ENCODE measurements at regions of chr3 and their contacts with region 1.

Region 1: GRCh38 chr3:42101048-42101447 is 9.9 kb downstream of the TRAK1 start:
- DNase-seq: peak; percentile 60
- H3K4me3 ChIP-seq: no peak overlapping the region
- CTCF ChIP-seq: no peak

Region 2: DNA sequence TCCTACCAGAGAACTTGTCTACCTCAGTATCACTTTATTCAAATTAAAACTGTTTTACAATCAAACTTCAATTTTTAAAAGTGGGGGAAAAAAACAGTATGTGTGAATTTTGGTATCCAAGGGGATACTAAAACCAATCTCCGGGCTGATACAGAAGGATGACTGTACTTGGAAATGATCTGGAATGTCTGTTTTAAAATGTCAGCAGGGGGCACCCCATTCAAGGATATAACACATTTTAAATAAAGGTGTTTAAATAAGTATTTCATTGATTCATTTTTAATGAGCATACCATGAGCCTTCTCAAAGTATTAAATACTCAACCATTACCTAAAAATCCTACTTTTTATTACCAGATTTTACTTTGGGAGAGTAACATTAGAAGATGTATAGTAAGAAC is 207.1 kb before region 1 on chr3:
- CTCF ChIA-PET with region 1: interaction called, 160 read pairs
- POLR2A ChIA-PET with region 1: no interaction called
- DNase-seq: peak; percentile 10
- H3K4me3 ChIP-seq: no peak overlapping the region
- CTCF ChIP-seq: peak; percentile 5

Region 3: DNA sequence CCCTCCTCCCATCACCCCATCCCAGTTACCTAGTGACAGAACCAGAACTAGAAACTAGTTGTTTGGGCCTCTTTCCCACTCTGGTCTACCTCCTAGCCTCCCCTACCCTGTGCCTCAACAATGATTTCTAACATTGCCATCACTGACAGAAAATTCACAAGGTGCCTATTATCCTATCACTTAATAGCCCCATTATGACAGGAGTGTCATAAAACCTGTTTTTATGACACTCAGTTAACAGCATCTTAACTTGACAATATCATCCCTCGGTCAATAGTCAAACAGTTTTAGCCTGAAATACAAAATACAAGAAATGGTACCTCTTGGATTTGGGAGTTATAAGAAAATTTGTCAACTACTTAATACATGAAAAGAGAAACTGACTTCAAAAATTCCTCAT is 185.7 kb before region 1 on chr3:
- CTCF ChIA-PET with region 1: interaction called, 30 read pairs
- POLR2A ChIA-PET with region 1: no interaction called
- DNase-seq: no peak
- H3K4me3 ChIP-seq: no peak overlapping the region
- CTCF ChIP-seq: no peak

Region 4: GRCh38 chr3:42007785-42008184 is 93.3 kb before region 1 on chr3:
- CTCF ChIA-PET with region 1: interaction called, 22 read pairs
- POLR2A ChIA-PET with region 1: no interaction called
- DNase-seq: no peak
- H3K4me3 ChIP-seq: no peak overlapping the region
- CTCF ChIP-seq: no peak

Region 5: GRCh38 chr3:42036483-42036823 is 64.6 kb before region 1 on chr3:
- CTCF ChIA-PET with region 1: interaction called, 10 read pairs
- POLR2A ChIA-PET with region 1: no interaction called
- DNase-seq: peak; percentile 87
- H3K4me3 ChIP-seq: no peak overlapping the region; the same call in 1 of the 2 replicates
- CTCF ChIP-seq: no peak

Region 6: DNA sequence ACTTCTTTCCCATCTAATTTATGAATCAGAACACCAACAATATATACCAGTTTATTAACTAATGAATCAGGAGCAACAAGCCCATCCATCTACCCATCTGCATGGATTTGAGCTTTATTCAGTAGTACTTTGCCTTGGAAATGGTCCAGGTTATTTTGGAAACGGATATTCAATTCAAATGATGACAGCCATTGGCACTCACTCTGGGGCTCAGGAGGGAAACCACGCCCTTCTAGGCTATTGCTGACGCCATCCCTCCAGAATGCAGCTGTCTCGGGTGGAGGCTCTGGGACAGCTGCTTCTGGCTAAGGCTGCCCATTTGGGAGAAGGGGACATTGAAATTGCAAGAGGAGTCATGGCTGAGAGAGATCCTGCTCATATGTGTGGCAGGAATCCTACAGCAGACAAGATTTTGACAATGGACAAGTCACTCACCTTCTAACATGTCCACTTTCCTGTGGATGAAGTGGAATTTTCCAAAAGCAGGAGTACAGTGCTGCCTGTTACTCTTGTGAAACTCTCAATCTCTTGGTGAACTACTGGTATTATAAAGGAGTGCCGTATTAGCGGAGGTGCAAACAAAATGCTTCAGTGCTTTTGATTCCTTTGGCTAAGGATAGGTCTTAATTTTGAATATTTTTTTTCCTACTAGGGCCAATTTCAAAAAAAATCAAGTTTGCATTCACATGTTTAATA is 39.2 kb before region 1 on chr3:
- CTCF ChIA-PET with region 1: interaction called, 14 read pairs
- POLR2A ChIA-PET with region 1: no interaction called
- DNase-seq: peak; percentile 52
- H3K4me3 ChIP-seq: no peak overlapping the region
- CTCF ChIP-seq: no peak

Region 7: GRCh38 chr3:42190701-42191462 is 89.8 kb after region 1 on chr3:
- CTCF ChIA-PET with region 1: interaction called, 28 read pairs
- POLR2A ChIA-PET with region 1: no interaction called
- DNase-seq: no peak
- H3K4me3 ChIP-seq: no peak overlapping the region
- CTCF ChIP-seq: peak; percentile 75

Measured in AG04449 (cell line).